CD4-positive, alpha-beta T cell (primary cell): ENCODE measurements at regions of chr7 and their contacts with region 1.

Region 1: DNA sequence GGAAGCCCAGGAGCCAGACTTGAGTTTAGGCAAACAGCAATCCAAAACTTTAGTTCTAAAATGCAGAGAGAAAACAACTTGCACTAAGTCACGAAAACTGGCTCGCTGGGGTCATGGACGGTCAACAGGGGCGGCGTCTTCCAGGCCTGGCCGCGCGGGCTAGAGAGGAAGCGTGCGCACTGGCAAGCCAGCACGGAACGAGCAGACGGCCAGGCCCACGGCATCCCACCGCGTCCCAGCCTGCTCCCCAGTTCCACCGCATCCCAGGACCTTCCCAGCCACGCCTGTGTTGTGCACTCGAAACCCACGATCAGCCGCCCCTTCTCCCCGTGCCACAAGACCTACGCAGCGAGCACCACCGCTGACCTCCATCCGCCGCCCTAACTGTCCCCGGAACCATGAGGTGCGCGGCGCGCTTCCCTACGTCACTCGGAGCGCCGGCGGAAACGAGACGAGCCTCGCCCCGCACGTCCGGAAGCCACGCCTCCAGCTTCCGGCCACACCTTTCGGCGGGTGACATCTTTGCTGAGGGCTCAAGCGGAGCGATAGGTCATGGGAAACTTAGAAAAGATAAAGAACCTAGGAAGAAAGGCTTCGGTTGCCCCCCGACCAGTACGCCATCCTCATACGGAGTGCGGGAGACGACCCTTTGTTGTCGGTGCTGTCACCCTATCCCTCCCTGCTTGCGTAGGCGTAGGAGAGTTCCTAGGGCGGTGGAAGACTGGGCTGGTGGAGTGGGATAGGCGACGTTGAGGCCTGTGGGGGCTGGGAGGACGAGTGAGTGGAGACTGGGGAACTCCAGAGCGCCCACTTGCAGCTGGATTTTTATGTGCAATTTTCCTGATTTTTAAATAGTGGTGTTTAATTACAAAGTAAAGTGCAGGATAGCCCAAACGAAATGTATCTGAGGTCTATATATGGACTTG is at the start of gene TBRG4:
- DNase-seq: peak; percentile 86 to 98 (median 91)
- ATAC-seq: peak; percentile 78
- H3K4me3 ChIP-seq: peak within 1 kb of the TSS; percentile 94
- H3K4me3 Mint-ChIP-seq: peak within 1 kb of the TSS; percentile 98
- H3K27ac ChIP-seq: peak within 1 kb of the TSS; percentile 99
- H3K27ac Mint-ChIP-seq: peak within 1 kb of the TSS; percentile 96
- H3K4me1 ChIP-seq: peaks cover 51% of the 10 kb centered on the region
- H3K4me1 Mint-ChIP-seq: peaks cover 55% of the 10 kb centered on the region
- H3K27me3 ChIP-seq: no peaks in the 10 kb centered on the region
- H3K27me3 Mint-ChIP-seq: peaks cover 9% of the 10 kb centered on the region
- CTCF ChIP-seq: no peak
- total RNA-seq, gene TBRG4: 104 to 105 TPM

Region 2: GRCh38 chr7:44748045-44748947 is 363.3 kb before region 1 on chr7 and contains the start of gene ZMIZ2:
- CTCF ChIA-PET with region 1: interaction called, 3 read pairs
- POLR2A ChIA-PET with region 1: no interaction called
- intact Hi-C with region 1: loop called in 1 of 2 experiments (anchors 2 kb)
- DNase-seq: peak; percentile 85 to 97 (median 92)
- ATAC-seq: peak; percentile 85
- H3K4me3 ChIP-seq: peak within 1 kb of the TSS; percentile 87
- H3K4me3 Mint-ChIP-seq: peak within 1 kb of the TSS; percentile 84
- H3K27ac ChIP-seq: peak within 1 kb of the TSS; percentile 70 to 75
- H3K27ac Mint-ChIP-seq: peak within 1 kb of the TSS; percentile 86
- H3K4me1 ChIP-seq: peaks cover 37% of the 10 kb centered on the region
- H3K4me1 Mint-ChIP-seq: peaks cover 43% of the 10 kb centered on the region
- H3K27me3 ChIP-seq: no peaks in the 10 kb centered on the region
- H3K27me3 Mint-ChIP-seq: no peaks in the 10 kb centered on the region
- CTCF ChIP-seq: no peak
- total RNA-seq, gene ZMIZ2: 81.5 to 82.0 TPM

Region 3: DNA sequence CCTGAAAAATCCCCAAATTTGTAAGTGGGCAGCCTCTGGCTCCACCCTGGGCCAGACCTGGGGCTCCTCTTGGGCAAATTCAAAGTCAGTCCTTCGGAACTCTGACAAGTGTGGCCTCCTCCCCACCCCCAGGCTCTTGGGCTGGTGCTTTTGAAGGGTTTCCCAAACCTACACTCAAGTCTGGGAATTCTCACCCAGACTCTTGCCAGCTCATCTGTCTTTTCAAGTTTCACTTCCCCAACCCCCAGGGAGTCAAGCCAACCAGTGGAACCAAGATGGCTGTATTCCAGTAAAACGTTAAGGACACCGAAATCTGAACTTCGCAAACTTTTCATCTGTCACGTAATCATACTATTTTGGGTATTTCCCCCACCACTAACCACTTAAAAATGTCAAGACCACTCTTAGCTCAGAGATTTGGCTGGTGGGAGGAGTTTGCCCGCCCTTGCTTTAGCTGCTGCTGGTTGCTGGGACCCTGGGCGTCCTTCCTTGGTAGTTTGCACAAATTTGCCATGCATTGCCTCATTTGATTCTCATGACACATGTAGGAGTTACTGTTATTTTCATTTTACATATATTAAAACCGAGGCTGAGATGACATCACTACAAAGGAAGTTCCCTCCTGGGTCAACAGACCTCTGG is 131.0 kb before region 1 on chr7:
- CTCF ChIA-PET with region 1: no interaction called
- POLR2A ChIA-PET with region 1: interaction called, 13 read pairs
- intact Hi-C with region 1: loop called in 1 of 2 experiments (anchors 5 kb)
- DNase-seq: peak in 6 of 14 experiments; percentile 45 to 91 (median 72)
- ATAC-seq: peak; percentile 19
- H3K4me3 ChIP-seq: no peak overlapping the region
- H3K4me3 Mint-ChIP-seq: peak overlapping the region; percentile 79
- H3K27ac ChIP-seq: peak overlapping the region; percentile 90 to 92
- H3K27ac Mint-ChIP-seq: peak overlapping the region; percentile 95
- H3K4me1 ChIP-seq: peaks cover 90% of the 10 kb centered on the region
- H3K4me1 Mint-ChIP-seq: peaks cover 90% of the 10 kb centered on the region
- H3K27me3 ChIP-seq: no peaks in the 10 kb centered on the region
- H3K27me3 Mint-ChIP-seq: no peaks in the 10 kb centered on the region
- CTCF ChIP-seq: no peak

Region 4: GRCh38 chr7:44999245-45000095 is 112.1 kb before region 1 on chr7:
- CTCF ChIA-PET with region 1: interaction called, 3 read pairs
- POLR2A ChIA-PET with region 1: interaction called, 36 read pairs
- intact Hi-C with region 1: loop called (anchors 1 to 2 kb)
- DNase-seq: peak; percentile 98 to 100 (median 99)
- ATAC-seq: peak; percentile 79
- H3K4me3 ChIP-seq: peak overlapping the region; percentile 69
- H3K4me3 Mint-ChIP-seq: peak overlapping the region; percentile 99
- H3K27ac ChIP-seq: peak overlapping the region; percentile 76 to 78
- H3K27ac Mint-ChIP-seq: peak overlapping the region; percentile 99
- H3K4me1 ChIP-seq: peaks cover 58% of the 10 kb centered on the region
- H3K4me1 Mint-ChIP-seq: peaks cover 52% of the 10 kb centered on the region
- H3K27me3 ChIP-seq: no peaks in the 10 kb centered on the region
- H3K27me3 Mint-ChIP-seq: no peaks in the 10 kb centered on the region
- CTCF ChIP-seq: no peak

Region 5: DNA sequence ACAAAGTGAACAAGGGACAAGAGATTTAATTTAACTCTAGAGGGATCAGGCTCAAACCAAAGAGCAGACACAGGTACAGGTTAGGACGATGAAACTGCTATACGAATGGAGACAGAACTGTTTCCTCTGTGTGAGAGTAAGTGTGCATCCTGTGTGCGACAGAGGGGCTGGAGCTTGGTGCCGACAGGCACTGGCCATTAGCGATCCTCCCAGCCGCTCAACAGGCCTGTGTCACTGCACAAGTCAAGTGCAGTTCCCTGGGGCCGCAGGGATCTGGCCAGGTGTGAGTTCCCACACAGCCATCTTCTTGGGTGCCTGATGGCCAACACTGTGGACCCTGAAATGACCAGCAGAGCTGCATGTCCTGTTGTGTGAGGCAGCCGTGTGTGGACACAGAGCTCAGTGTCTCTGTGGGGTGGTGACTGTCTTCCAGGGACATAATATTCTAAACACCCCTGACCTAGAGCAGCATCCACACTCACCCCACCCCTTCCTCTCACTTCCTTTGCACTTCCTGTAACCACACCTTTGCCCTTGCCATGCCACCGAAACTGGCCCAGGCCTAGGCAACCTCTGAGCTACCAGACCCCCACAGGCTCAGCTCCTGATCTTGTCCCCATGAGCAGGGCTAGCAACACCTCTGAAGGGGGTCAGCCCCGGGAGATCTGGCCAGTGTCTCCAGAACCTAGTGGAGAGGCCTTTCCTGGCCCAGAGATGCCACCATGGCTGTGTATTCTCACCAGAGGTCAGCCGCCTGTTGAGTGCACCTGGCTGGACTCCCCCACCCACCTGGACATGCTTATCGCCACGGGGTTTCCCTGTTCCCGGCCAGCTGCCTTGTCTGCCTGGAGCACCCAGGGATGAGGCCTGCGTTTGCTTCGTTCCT is 11.7 kb after region 1 on chr7:
- CTCF ChIA-PET with region 1: interaction called, 3 read pairs
- POLR2A ChIA-PET with region 1: interaction called, 13 read pairs
- intact Hi-C with region 1: no loop called
- DNase-seq: peak in 4 of 14 experiments; percentile 5 to 64 (median 18)
- ATAC-seq: peak; percentile 44
- H3K4me3 ChIP-seq: no peak overlapping the region
- H3K4me3 Mint-ChIP-seq: no peak overlapping the region
- H3K27ac ChIP-seq: peak overlapping the region in 1 of 2 donors; percentile 47
- H3K27ac Mint-ChIP-seq: peak overlapping the region; percentile 70
- H3K4me1 ChIP-seq: peaks cover 31% of the 10 kb centered on the region
- H3K4me1 Mint-ChIP-seq: peaks cover 15% of the 10 kb centered on the region
- H3K27me3 ChIP-seq: no peaks in the 10 kb centered on the region
- H3K27me3 Mint-ChIP-seq: peaks cover 4% of the 10 kb centered on the region
- CTCF ChIP-seq: no peak